SK-N-SH (cell line): ENCODE measurements at regions of chr11 and their contacts with region 1.

Region 1: GRCh38 chr11:61695917-61696316 is 15.7 kb downstream of the DAGLA start:
- DNase-seq: peak; percentile 56
- H3K4me3 ChIP-seq: no peak overlapping the region
- H3K27ac ChIP-seq: peak overlapping the region in 1 of 2 experiments; percentile 32; a peak in 3 of 4 replicates
- H3K4me1 ChIP-seq: peaks cover 20 to 58% of the 10 kb centered on the region in 2 experiments; a peak in 3 of 4 replicates
- H3K27me3 ChIP-seq: no peaks in the 10 kb centered on the region
- CTCF ChIP-seq: peak; percentile 28
- EP300 ChIP-seq: no peak
- RAD21 ChIP-seq: no peak

Region 2: DNA sequence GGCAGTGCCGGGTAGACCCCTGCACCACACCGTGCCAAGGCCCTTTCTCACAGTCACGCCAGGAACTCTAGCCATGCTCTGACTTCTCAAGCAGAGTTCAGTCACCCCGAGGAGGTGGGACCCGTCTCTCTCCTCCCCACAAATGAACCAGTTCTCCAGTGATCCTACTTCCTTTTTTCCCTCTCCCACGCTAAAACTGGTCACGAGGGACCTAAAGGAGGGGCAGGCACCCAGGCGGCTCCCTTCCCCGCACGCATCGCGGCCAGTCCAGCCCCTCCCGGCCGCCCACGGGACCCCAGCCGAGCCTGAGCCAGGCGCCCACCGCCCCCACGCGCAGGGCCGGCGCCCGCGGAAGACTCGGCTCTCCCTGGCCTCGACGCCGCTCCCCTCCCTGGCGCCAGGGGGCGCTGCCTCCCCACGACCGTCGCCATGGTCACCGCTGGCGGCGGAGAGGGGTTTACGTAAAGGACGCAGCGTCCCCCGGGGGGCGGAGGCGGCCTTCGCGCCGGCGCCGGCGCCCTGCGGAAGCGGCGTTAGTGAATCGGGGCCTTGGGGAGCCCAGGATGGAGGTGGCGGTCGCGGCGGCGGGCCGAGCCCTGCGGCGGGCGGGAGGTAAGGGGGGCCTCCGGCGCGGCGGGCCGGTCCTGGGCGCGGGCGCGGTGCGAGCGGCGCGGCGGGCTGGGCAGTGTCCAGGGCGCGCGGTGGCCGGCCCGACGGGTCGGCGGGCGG is 15.9 kb before region 1 on chr11 and contains the start of gene DAGLA:
- CTCF ChIA-PET with region 1: interaction called, 11 read pairs
- POLR2A ChIA-PET with region 1: no interaction called
- DNase-seq: peak; percentile 99
- H3K4me3 ChIP-seq: peak within 1 kb of the TSS; percentile 59 to 63
- H3K27ac ChIP-seq: no peak within 1 kb of the TSS
- H3K4me1 ChIP-seq: peaks cover 0 to 14% of the 10 kb centered on the region in 2 experiments; a peak in 1 of 4 replicates
- H3K27me3 ChIP-seq: peaks cover 19% of the 10 kb centered on the region; the same call in 1 of the 2 replicates
- CTCF ChIP-seq: peak; percentile 71
- EP300 ChIP-seq: no peak
- RAD21 ChIP-seq: peak; percentile 64
- polyA plus RNA-seq, gene DAGLA: 2.7 and 3.3 TPM in 2 replicates